IMR-90 (cell line): ENCODE measurements at regions of chr2 and their contacts with region 1.

Region 1: DNA sequence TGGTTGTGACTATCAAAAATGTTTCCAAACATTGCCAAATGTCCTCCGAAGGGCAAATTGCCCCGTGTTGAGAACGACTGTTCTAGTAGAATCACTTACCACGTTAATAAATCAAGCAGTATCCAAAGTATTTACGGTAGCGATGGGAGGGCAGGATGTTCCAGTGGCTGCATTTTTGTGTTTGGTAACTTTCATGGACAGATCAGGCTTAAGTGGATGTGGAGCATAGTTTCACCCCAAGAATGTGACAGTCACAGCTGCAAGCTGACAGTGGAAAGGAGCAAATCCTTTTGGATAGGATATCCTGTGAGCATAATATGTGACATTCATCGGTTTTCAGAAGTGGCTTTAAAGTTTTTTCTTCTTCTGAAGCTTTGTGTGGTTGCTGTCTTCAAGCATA is 46.3 kb upstream of the DARS1 start:
- DNase-seq: no peak
- ATAC-seq: no peak; the same call in 1 of the 2 replicates
- H3K4me3 ChIP-seq: no peak overlapping the region
- H3K27ac ChIP-seq: no peak overlapping the region
- H3K4me1 ChIP-seq: no peaks in the 10 kb centered on the region
- H3K27me3 ChIP-seq: peaks cover 9% of the 10 kb centered on the region; the same call in 1 of the 2 replicates
- CTCF ChIP-seq: no peak
- POLR2A ChIP-seq: no peak
- RAD21 ChIP-seq: no peak

Region 2: DNA sequence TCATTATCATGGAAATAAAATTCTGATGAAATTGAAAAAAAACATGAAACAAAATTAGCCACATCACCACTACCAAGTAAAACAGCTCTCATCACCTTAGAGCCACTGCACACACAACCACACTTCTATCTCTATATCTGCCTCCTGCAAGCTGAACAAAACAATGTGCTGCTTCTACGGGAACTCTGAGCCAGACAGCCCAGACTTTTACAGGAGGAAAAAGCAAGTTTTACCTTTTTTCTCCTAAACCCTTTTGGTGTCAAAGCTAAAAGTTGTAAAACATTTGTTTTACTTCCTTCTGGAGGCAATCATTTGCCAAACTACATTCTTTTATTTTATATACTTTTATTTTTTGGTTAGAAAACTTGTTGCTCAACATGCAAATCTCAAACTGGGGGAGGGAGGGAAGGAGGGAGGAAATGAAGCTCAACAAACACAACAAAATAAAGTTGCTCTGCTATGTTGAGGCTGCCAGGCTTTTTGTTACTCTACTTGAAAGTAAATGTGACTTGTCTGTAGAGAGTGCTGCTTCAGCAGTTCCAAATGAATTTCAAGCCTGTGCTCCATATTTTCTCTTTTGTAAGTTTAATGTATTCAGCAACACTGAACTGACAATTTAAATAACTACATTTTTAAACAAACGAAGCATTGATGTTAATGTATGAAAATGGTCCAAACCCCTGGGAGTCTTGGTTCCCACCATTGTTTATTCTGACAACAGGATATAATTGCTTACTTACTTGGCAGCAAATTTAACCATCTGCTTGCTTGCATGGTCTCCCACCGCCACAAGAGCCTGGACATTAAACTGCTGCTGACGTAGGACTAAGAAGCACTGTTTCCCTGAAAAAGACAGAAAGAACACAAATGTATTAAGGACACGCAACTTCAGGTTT is 70.8 kb before region 1 on chr2:
- CTCF ChIA-PET with region 1: no interaction called
- POLR2A ChIA-PET with region 1: interaction called, 14 read pairs
- dilution Hi-C with region 1: no loop called
- in situ Hi-C with region 1: no loop called
- intact Hi-C with region 1: no loop called
- DNase-seq: peak; percentile 80
- ATAC-seq: peak; percentile 59
- H3K4me3 ChIP-seq: no peak overlapping the region
- H3K27ac ChIP-seq: peak overlapping the region; percentile 52; the same call in 1 of the 2 replicates
- H3K4me1 ChIP-seq: peaks cover 2% of the 10 kb centered on the region; the same call in 1 of the 2 replicates
- H3K27me3 ChIP-seq: no peaks in the 10 kb centered on the region
- CTCF ChIP-seq: no peak
- POLR2A ChIP-seq: no peak
- RAD21 ChIP-seq: no peak